HCT116 (cell line): ENCODE measurements at regions of chr12 and their contacts with region 1.

Region 1: GRCh38 chr12:121579981-121580868 is 598 bp downstream of the KDM2B start:
- DNase-seq: no peak
- ATAC-seq: peak; percentile 86
- H3K4me3 ChIP-seq: peak overlapping the region; percentile 47 to 60
- H3K27ac ChIP-seq: no peak overlapping the region; the same call in 1 of the 2 replicates
- H3K4me1 ChIP-seq: peaks cover 13 to 29% of the 10 kb centered on the region in 2 experiments
- H3K27me3 ChIP-seq: no peaks in the 10 kb centered on the region
- CTCF ChIP-seq: no peak
- POLR2A ChIP-seq: no peak
- RAD21 ChIP-seq: no peak

Region 2: DNA sequence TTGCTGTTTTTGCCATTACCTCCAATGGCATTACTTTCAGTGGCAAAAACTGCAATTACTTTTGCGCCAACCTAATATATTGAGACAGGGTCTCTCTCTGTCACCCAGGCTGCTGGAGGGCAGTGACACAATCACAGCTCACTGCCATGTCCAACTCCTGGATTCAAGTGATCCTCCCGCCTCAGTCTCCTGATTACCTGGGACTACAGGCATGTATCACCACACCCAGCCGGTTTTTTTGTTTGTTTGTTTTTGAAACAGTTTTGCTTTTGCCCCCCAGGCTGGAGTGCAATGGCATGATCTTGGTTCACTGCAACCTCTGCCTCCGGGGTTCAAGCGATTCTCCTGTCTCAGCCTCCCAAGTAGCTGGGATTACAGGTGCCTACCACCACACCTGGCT is 16.3 kb after region 1 on chr12:
- CTCF ChIA-PET with region 1: no interaction called
- POLR2A ChIA-PET with region 1: no interaction called
- RAD21 ChIA-PET with region 1: no interaction called
- intact Hi-C with region 1: loop called (anchors 2 kb)
- DNase-seq: no peak
- ATAC-seq: no peak
- H3K4me3 ChIP-seq: no peak overlapping the region
- H3K27ac ChIP-seq: no peak overlapping the region
- H3K4me1 ChIP-seq: no peaks in the 10 kb centered on the region
- H3K27me3 ChIP-seq: no peaks in the 10 kb centered on the region
- CTCF ChIP-seq: no peak
- POLR2A ChIP-seq: no peak
- RAD21 ChIP-seq: no peak

Region 3: DNA sequence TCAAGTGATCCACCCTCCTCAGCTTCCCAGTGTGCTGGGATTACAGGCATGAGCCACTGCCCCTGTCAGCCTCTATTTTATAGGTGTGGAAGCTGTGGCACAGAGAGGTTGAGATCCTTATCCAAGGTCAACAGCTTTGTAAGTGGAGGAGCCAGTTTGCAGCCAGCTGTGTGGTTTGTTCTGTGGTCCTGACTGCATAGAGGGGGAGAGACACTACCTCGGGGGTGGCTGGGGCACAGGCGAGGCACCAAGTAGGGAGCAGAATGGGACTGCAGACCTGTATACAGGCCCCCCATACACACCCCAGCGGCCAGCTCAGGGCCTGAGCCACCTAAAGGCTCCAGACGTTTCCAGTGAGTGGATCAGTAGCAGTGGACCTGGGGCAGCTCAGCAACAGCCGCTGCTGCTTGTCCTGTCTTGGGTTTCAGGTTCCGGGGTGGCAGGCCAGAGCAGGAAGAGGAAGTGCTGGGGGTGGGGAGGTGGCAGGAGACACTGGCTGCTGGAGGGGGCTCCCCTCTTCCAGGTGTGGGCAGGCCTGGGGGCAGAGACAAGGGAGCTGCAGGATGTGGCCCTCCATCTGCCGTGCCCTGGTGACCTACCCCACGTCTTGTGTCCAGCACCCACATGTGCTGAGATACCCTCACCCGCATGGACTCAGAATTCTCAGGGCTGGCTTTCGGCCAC is 57.1 kb after region 1 on chr12:
- CTCF ChIA-PET with region 1: no interaction called
- POLR2A ChIA-PET with region 1: no interaction called
- RAD21 ChIA-PET with region 1: no interaction called
- intact Hi-C with region 1: no loop called
- DNase-seq: no peak
- ATAC-seq: no peak
- H3K4me3 ChIP-seq: no peak overlapping the region
- H3K27ac ChIP-seq: no peak overlapping the region
- H3K4me1 ChIP-seq: no peaks in the 10 kb centered on the region
- H3K27me3 ChIP-seq: no peaks in the 10 kb centered on the region
- CTCF ChIP-seq: no peak
- POLR2A ChIP-seq: no peak
- RAD21 ChIP-seq: no peak

Region 4: GRCh38 chr12:121823101-121823726 is 243.0 kb after region 1 on chr12:
- CTCF ChIA-PET with region 1: no interaction called
- POLR2A ChIA-PET with region 1: no interaction called
- RAD21 ChIA-PET with region 1: no interaction called
- intact Hi-C with region 1: no loop called
- DNase-seq: no peak
- ATAC-seq: no peak
- H3K4me3 ChIP-seq: no peak overlapping the region
- H3K27ac ChIP-seq: no peak overlapping the region
- H3K4me1 ChIP-seq: no peaks in the 10 kb centered on the region
- H3K27me3 ChIP-seq: no peaks in the 10 kb centered on the region
- CTCF ChIP-seq: no peak
- POLR2A ChIP-seq: no peak
- RAD21 ChIP-seq: no peak